AG04449 (cell line): ENCODE measurements at regions of chr18 and their contacts with region 1.

Region 1: DNA sequence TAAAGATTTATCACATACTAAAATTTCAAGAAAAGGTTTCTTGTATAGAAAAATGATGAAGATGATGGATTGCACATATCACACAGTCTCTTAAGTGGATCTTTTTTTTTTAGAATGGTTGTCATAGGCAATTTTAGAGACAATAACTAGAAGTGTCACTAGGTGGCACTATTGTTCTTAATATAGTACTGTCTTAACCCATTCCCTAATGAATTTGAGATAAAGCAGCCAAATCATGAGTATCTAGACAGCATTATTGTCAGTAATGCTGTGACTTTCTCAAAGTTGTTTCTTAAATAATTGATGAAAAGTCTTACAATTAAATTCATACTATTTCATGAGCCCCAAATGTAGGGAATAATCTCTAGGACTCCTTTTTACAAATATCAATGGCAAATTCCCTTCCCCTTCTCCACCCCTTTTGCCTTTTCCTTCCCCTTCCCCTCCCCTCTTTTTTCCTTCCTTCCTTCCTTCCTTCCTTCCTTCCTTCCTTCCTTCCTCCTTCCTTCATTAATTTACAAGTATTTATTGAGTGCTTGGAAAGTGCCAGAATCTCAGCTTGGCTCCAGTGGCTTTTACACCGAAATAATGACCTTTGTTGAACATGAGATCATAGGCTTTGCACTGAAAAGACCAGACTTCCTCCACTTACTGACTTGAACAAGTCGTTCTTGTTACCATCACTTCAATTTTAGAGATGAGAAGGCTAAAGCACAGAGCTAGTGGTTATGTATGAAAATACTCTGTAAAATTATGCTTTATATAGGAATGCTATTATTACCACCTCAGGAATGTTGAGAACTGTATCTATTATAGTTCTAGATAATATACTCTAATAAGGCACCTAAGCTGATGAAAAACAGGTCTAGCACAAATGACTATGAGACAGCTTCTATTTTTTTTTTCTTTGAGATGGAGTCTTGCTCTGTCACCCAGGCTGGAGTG is 19.8 kb downstream of the MYL12B start:
- DNase-seq: no peak
- H3K4me3 ChIP-seq: no peak overlapping the region
- CTCF ChIP-seq: peak; percentile 31

Region 2: GRCh38 chr18:3081584-3081991 is 200.1 kb before region 1 on chr18:
- CTCF ChIA-PET with region 1: no interaction called
- POLR2A ChIA-PET with region 1: no interaction called
- DNase-seq: no peak
- H3K4me3 ChIP-seq: no peak overlapping the region
- CTCF ChIP-seq: no peak

Region 3: GRCh38 chr18:3297025-3297984 is 15.6 kb after region 1 on chr18:
- CTCF ChIA-PET with region 1: interaction called, 15 read pairs
- POLR2A ChIA-PET with region 1: no interaction called
- DNase-seq: no peak
- H3K4me3 ChIP-seq: peak overlapping the region; percentile 61
- CTCF ChIP-seq: peak; percentile 52